CD8-positive, alpha-beta T cell (primary cell): ENCODE measurements at regions of chr6 and their contacts with region 1.

Region 1: GRCh38 chr6:44172731-44173500 is 14.3 kb downstream of the CAPN11 start:
- DNase-seq: peak; percentile 56 to 85 (median 74)
- ATAC-seq: peak; percentile 85
- H3K4me3 ChIP-seq: no peak overlapping the region
- H3K4me3 Mint-ChIP-seq: peak overlapping the region; percentile 40
- H3K27ac ChIP-seq: no peak overlapping the region
- H3K27ac Mint-ChIP-seq: no peak overlapping the region
- H3K4me1 ChIP-seq: peaks cover 11% of the 10 kb centered on the region
- H3K4me1 Mint-ChIP-seq: peaks cover 20% of the 10 kb centered on the region
- H3K27me3 ChIP-seq: no peaks in the 10 kb centered on the region
- H3K27me3 Mint-ChIP-seq: peaks cover 8% of the 10 kb centered on the region
- CTCF ChIP-seq: peak; percentile 82

Region 2: DNA sequence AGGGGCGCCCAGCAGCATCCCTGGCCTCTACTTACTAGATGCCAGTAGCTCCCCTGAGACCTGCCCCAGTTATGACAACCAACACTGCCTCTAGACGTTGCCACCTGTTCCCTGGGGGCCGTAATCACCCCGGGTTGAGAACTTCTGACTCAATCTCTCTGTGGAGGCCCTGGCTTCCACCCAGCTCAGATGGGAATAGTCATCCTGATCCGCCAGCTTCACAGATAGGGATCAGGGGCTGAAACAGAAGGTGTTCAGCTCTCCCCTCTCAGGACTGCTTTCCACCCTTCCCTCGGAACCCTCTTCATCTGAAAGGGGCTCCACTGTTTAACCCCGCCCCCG is 10.9 kb before region 1 on chr6:
- CTCF ChIA-PET with region 1: interaction called, 28 read pairs
- POLR2A ChIA-PET with region 1: no interaction called
- intact Hi-C with region 1: no loop called
- DNase-seq: no peak
- ATAC-seq: no peak
- H3K4me3 ChIP-seq: no peak overlapping the region
- H3K4me3 Mint-ChIP-seq: no peak overlapping the region
- H3K27ac ChIP-seq: no peak overlapping the region
- H3K27ac Mint-ChIP-seq: no peak overlapping the region
- H3K4me1 ChIP-seq: no peaks in the 10 kb centered on the region
- H3K4me1 Mint-ChIP-seq: no peaks in the 10 kb centered on the region
- H3K27me3 ChIP-seq: no peaks in the 10 kb centered on the region
- H3K27me3 Mint-ChIP-seq: peaks cover 20% of the 10 kb centered on the region
- CTCF ChIP-seq: no peak

Region 3: GRCh38 chr6:44192428-44193041 is 19.6 kb after region 1 on chr6:
- CTCF ChIA-PET with region 1: interaction called, 13 read pairs
- POLR2A ChIA-PET with region 1: no interaction called
- intact Hi-C with region 1: no loop called
- DNase-seq: no peak
- ATAC-seq: no peak
- H3K4me3 ChIP-seq: no peak overlapping the region
- H3K4me3 Mint-ChIP-seq: no peak overlapping the region
- H3K27ac ChIP-seq: no peak overlapping the region
- H3K27ac Mint-ChIP-seq: no peak overlapping the region
- H3K4me1 ChIP-seq: no peaks in the 10 kb centered on the region
- H3K4me1 Mint-ChIP-seq: no peaks in the 10 kb centered on the region
- H3K27me3 ChIP-seq: no peaks in the 10 kb centered on the region
- H3K27me3 Mint-ChIP-seq: peaks cover 4% of the 10 kb centered on the region
- CTCF ChIP-seq: no peak

Region 4: GRCh38 chr6:44221291-44221960 is 48.5 kb after region 1 on chr6:
- CTCF ChIA-PET with region 1: interaction called, 10 read pairs
- POLR2A ChIA-PET with region 1: interaction called, 4 read pairs
- intact Hi-C with region 1: loop called in 1 of 2 experiments (anchors 1 kb)
- DNase-seq: peak; percentile 53 to 85 (median 72)
- ATAC-seq: peak; percentile 60
- H3K4me3 ChIP-seq: no peak overlapping the region
- H3K4me3 Mint-ChIP-seq: no peak overlapping the region
- H3K27ac ChIP-seq: no peak overlapping the region
- H3K27ac Mint-ChIP-seq: no peak overlapping the region
- H3K4me1 ChIP-seq: peaks cover 28% of the 10 kb centered on the region
- H3K4me1 Mint-ChIP-seq: peaks cover 41% of the 10 kb centered on the region
- H3K27me3 ChIP-seq: peaks cover 0 to 8% of the 10 kb centered on the region in 2 experiments
- H3K27me3 Mint-ChIP-seq: peaks cover 3% of the 10 kb centered on the region
- CTCF ChIP-seq: peak; percentile 47

Region 5: DNA sequence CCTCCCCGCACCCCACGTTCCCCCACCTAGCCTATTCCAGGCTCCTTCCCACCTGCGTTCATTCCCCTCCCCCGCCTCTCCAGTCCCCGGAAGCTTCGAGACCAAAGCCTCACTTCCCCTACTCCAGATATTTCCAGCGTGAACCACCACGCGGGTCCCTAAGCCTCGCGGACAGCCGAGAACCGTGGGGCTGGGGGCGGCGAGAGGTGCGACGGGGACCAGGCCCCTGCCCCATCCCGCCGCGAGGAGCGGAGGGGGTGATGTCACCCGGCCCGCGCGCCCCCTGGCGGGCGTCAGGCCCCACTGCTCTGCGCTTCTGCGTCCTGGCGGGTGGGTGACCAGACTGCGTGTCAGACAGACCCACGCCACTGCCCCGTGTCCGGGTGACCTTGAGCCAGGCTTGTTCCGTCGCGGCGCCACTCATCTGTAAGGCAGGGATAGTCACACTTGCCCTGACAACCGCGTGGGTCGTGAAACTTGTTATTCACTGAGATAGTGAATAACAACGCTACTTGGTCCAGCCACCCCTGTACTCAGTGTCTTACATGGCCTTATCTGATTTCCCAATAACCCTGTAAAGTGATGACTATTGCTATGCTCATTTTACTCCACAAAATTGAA is 65.0 kb after region 1 on chr6:
- CTCF ChIA-PET with region 1: interaction called, 23 read pairs
- POLR2A ChIA-PET with region 1: no interaction called
- intact Hi-C with region 1: loop called (anchors 1 kb)
- DNase-seq: peak; percentile 62 to 89 (median 77)
- ATAC-seq: peak; percentile 91
- H3K4me3 ChIP-seq: peak overlapping the region; percentile 76 to 98
- H3K4me3 Mint-ChIP-seq: peak overlapping the region; percentile 88
- H3K27ac ChIP-seq: peak overlapping the region; percentile 88 to 95
- H3K27ac Mint-ChIP-seq: peak overlapping the region; percentile 93
- H3K4me1 ChIP-seq: peaks cover 12% of the 10 kb centered on the region
- H3K4me1 Mint-ChIP-seq: peaks cover 11% of the 10 kb centered on the region
- H3K27me3 ChIP-seq: no peaks in the 10 kb centered on the region
- H3K27me3 Mint-ChIP-seq: no peaks in the 10 kb centered on the region
- CTCF ChIP-seq: peak; percentile 93

Region 6: GRCh38 chr6:44257025-44257752 is 84.3 kb after region 1 on chr6 and contains the start of gene SLC35B2:
- CTCF ChIA-PET with region 1: interaction called, 17 read pairs
- POLR2A ChIA-PET with region 1: no interaction called
- intact Hi-C with region 1: loop called in 1 of 2 experiments (anchors 1 kb)
- DNase-seq: peak in 8 of 9 experiments; percentile 33 to 87 (median 64)
- ATAC-seq: peak; percentile 79
- H3K4me3 ChIP-seq: peak within 1 kb of the TSS; percentile 93 to 94
- H3K4me3 Mint-ChIP-seq: peak within 1 kb of the TSS; percentile 88
- H3K27ac ChIP-seq: peak within 1 kb of the TSS; percentile 47 to 86
- H3K27ac Mint-ChIP-seq: peak within 1 kb of the TSS; percentile 90
- H3K4me1 ChIP-seq: peaks cover 31% of the 10 kb centered on the region
- H3K4me1 Mint-ChIP-seq: peaks cover 51% of the 10 kb centered on the region
- H3K27me3 ChIP-seq: no peaks in the 10 kb centered on the region
- H3K27me3 Mint-ChIP-seq: no peaks in the 10 kb centered on the region
- CTCF ChIP-seq: peak; percentile 59
- total RNA-seq, gene SLC35B2: 6.3 to 6.4 TPM

Region 7: GRCh38 chr6:44304282-44305199 is 131.6 kb after region 1 on chr6:
- CTCF ChIA-PET with region 1: interaction called, 17 read pairs
- POLR2A ChIA-PET with region 1: interaction called, 3 read pairs
- intact Hi-C with region 1: loop called in 1 of 2 experiments (anchors 2 kb)
- DNase-seq: peak; percentile 9 to 67 (median 49)
- ATAC-seq: peak; percentile 94
- H3K4me3 ChIP-seq: no peak overlapping the region
- H3K4me3 Mint-ChIP-seq: no peak overlapping the region
- H3K27ac ChIP-seq: no peak overlapping the region
- H3K27ac Mint-ChIP-seq: no peak overlapping the region
- H3K4me1 ChIP-seq: no peaks in the 10 kb centered on the region
- H3K4me1 Mint-ChIP-seq: no peaks in the 10 kb centered on the region
- H3K27me3 ChIP-seq: no peaks in the 10 kb centered on the region
- H3K27me3 Mint-ChIP-seq: no peaks in the 10 kb centered on the region
- CTCF ChIP-seq: peak; percentile 80

Region 8: DNA sequence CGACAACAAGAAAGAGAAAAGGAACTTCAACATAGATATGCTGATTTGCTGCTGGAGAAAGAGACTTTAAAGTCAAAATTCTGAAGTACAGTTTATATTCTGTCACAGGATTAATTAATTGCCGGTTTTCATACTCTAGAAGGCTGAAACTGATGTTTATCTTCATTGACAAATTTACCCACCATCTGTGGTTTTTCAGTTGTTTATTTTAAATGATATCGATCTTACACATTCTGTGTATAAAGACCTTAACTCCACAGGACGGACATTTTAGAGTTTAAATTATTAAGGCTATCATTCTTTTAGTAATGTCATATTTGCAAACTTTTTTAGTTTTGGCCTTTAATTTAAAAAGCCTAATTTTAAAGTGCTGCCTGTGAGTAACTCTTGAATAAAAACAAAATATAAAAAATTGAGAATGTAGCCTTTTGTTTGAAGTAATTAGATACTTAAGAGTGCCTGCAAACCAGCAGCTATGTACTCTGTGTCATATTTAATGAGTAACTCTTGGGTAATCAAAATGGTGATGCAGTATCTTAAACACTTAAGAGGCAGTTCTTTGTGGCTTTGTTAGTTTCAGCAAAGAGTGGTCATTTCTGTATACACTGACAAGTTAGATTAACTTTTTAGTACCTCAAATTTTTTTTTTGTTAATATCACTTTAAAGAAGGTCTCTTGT is 273.9 kb after region 1 on chr6:
- CTCF ChIA-PET with region 1: no interaction called
- POLR2A ChIA-PET with region 1: no interaction called
- intact Hi-C with region 1: no loop called
- DNase-seq: no peak
- ATAC-seq: no peak
- H3K4me3 ChIP-seq: no peak overlapping the region
- H3K4me3 Mint-ChIP-seq: no peak overlapping the region
- H3K27ac ChIP-seq: no peak overlapping the region
- H3K27ac Mint-ChIP-seq: no peak overlapping the region
- H3K4me1 ChIP-seq: no peaks in the 10 kb centered on the region
- H3K4me1 Mint-ChIP-seq: peaks cover 5% of the 10 kb centered on the region
- H3K27me3 ChIP-seq: no peaks in the 10 kb centered on the region
- H3K27me3 Mint-ChIP-seq: no peaks in the 10 kb centered on the region
- CTCF ChIP-seq: no peak